Motor neuron (in vitro differentiated cells): ENCODE measurements at regions of chr9 and their contacts with region 1.

Region 1: DNA sequence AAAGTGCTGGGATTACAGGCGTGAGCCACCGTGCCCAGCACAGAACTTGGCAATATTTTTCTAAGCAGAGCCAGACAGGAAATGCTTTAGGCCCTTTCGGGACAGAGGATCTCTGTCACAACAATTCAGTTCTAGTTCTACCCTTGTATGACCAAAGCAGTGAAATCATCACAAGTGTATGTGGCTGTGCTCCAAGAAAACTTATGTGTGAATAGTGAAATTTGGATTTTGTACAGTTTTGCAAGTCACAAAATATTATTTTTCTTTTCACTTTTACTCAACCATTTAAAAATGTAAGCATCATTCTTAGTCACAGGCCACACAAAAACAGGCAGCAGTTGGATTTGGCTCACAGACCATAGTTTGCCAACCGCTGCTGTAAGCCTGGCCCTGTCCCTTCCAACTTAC is 20.4 kb upstream of the PRUNE2 start:
- ATAC-seq: no peak
- H3K4me3 ChIP-seq: no peak overlapping the region
- H3K27ac ChIP-seq: no peak overlapping the region
- H3K4me1 ChIP-seq: no peaks in the 10 kb centered on the region

Region 2: GRCh38 chr9:77024776-77025545 is 98.6 kb after region 1 on chr9:
- in situ Hi-C with region 1: loop called in 1 of 9 experiments (anchors 25 kb)
- ATAC-seq: no peak
- H3K4me3 ChIP-seq: no peak overlapping the region
- H3K27ac ChIP-seq: no peak overlapping the region
- H3K4me1 ChIP-seq: no peaks in the 10 kb centered on the region